ENCODE measurements at regions of chr2 and their contacts with region 1.

Region 1: GRCh38 chr2:28566521-28567041 is 70.7 kb downstream of the PLB1 start:
- DNase-seq: peak; percentile 93
- H3K4me3 Mint-ChIP-seq: peak overlapping the region; percentile 83
- H3K27ac Mint-ChIP-seq: peak overlapping the region; percentile 71
- H3K4me1 Mint-ChIP-seq: peaks cover 8% of the 10 kb centered on the region
- H3K27me3 Mint-ChIP-seq: no peaks in the 10 kb centered on the region

Region 2: GRCh38 chr2:28583899-28584553 is 17.4 kb after region 1 on chr2:
- CTCF ChIA-PET with region 1: interaction called, 11 read pairs
- intact Hi-C with region 1: loop called (anchors 1 kb)
- DNase-seq: peak; percentile 89
- H3K4me3 Mint-ChIP-seq: peak overlapping the region; percentile 39
- H3K27ac Mint-ChIP-seq: peak overlapping the region; percentile 77
- H3K4me1 Mint-ChIP-seq: peaks cover 45% of the 10 kb centered on the region
- H3K27me3 Mint-ChIP-seq: no peaks in the 10 kb centered on the region

Region 3: GRCh38 chr2:28810384-28811285 is 244.1 kb after region 1 on chr2 and contains the start of gene SPDYA:
- CTCF ChIA-PET with region 1: interaction called, 4 read pairs
- intact Hi-C with region 1: loop called (anchors 1 kb)
- DNase-seq: peak; percentile 82
- H3K4me3 Mint-ChIP-seq: peak within 1 kb of the TSS; percentile 75
- H3K27ac Mint-ChIP-seq: no peak within 1 kb of the TSS
- H3K4me1 Mint-ChIP-seq: peaks cover 11% of the 10 kb centered on the region
- H3K27me3 Mint-ChIP-seq: no peaks in the 10 kb centered on the region
- total RNA-seq, gene SPDYA: 1.8 to 2.0 TPM

Region 4: GRCh38 chr2:28870146-28870891 is 303.7 kb after region 1 on chr2 and contains the start of gene TRMT61B:
- CTCF ChIA-PET with region 1: no interaction called
- intact Hi-C with region 1: loop called (anchors 1 kb)
- DNase-seq: peak; percentile 97
- H3K4me3 Mint-ChIP-seq: peak within 1 kb of the TSS; percentile 89
- H3K27ac Mint-ChIP-seq: peak within 1 kb of the TSS; percentile 89
- H3K4me1 Mint-ChIP-seq: peaks cover 31% of the 10 kb centered on the region
- H3K27me3 Mint-ChIP-seq: no peaks in the 10 kb centered on the region
- total RNA-seq, gene TRMT61B: 13.6 to 15.5 TPM

Region 5: GRCh38 chr2:28952816-28953211 is 386.2 kb after region 1 on chr2:
- CTCF ChIA-PET with region 1: no interaction called
- intact Hi-C with region 1: loop called (anchors 1 kb)
- DNase-seq: peak; percentile 37
- H3K4me3 Mint-ChIP-seq: no peak overlapping the region
- H3K27ac Mint-ChIP-seq: no peak overlapping the region
- H3K4me1 Mint-ChIP-seq: peaks cover 3% of the 10 kb centered on the region
- H3K27me3 Mint-ChIP-seq: no peaks in the 10 kb centered on the region

Region 6: DNA sequence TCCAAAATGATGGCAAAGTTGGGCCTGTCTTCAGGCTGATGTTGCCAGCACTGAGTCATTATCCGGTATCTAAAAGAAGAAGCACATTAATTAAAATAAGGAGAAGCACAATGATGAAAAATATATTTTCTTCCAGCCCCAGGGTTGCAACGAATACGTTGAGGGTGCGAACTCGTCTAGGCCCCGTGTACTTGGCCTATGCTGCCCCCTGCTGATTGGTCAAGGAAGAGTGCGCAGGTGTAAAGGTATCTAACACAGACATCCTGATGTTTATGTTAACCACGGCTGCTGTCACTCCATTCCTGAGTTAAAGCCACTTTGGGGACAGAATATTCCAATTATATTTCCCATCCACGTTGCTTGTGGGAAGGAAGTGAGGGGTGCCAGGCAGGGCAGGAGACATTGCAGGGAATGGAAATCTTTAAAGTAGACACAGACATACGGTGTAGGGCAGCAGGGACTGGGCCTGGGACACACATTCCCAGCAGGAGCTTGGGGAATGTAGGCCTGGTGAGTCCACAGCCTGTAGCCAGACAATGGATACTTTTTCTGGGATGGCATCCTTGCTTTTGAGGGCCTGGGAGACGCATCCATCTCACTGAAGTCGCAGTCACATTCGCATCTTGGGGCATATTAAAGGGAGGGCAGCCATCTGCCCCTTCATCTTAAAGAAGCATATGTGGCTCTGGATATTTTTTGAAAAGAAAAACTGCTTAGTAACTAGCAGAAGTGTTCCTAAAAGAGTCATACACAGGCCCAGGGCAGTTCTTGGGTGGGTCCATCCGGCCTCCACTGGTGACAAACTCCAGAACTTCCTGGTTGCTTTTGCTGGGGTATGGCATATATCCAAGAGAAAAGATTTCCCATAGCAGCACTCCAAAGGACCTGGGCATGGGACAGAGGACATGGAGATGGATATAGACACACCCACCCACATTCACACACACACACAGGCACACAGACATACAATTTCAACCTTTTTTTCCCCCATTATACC is 630.5 kb after region 1 on chr2:
- CTCF ChIA-PET with region 1: no interaction called
- intact Hi-C with region 1: loop called (anchors 5 kb)
- DNase-seq: peak; percentile 91
- H3K4me3 Mint-ChIP-seq: no peak overlapping the region
- H3K27ac Mint-ChIP-seq: no peak overlapping the region
- H3K4me1 Mint-ChIP-seq: no peaks in the 10 kb centered on the region
- H3K27me3 Mint-ChIP-seq: no peaks in the 10 kb centered on the region